HepG2 (cell line): ENCODE measurements at regions of chr7 and their contacts with region 1.

Region 1: DNA sequence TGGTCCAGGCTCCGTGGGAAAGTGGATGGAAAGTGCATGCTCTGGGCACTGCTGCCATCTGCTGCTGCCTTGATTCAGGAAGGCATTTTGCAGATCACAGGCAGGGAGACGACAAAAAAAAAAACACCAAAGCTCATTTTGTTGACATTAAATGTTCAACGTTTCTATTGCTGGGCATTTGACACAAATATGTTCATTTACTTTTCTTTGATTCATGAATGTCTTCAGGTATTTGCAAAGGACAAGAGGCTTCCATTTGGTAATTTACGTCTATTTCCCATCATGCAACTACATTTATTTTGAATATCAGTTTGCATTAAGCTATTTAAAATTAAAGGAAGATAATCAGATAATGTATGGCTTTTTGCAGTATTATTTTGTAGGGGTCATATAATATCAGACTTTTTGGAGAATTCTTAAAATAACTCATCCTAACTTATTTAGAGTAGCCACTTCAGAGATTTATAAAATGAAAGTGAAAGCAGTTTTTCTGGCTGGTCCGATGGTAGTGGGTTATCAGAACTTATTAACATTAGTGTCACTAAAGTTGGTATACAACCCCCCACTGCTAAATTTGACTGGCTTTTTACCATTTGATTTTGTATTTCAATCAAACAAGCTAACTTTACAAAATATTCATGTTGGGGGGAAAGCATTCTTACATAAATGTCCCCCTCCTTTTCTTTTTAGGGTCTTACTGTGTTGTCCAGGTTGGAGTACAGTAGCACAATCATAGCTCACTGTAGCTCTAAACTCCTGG is 65.3 kb downstream of the PDIA4 start:
- DNase-seq: peak; percentile 45
- ATAC-seq: peak; percentile 3; the same call in 2 of the 3 replicates
- H3K4me3 ChIP-seq: peak overlapping the region; percentile 70 to 81 (median 71)
- H3K27ac ChIP-seq: peak overlapping the region; percentile 53
- H3K4me1 ChIP-seq: peaks cover 60% of the 10 kb centered on the region
- H3K27me3 ChIP-seq: no peaks in the 10 kb centered on the region; a peak in 2 of 5 replicates
- CTCF ChIP-seq: peak; percentile 93
- EP300 ChIP-seq: no peak
- POLR2A ChIP-seq: no peak
- RAD21 ChIP-seq: peak; percentile 48

Region 2: GRCh38 chr7:148503875-148504487 is 459.0 kb before region 1 on chr7:
- CTCF ChIA-PET with region 1: interaction called, 5 read pairs
- POLR2A ChIA-PET with region 1: no interaction called
- in situ Hi-C with region 1: loop called (anchors 10 kb)
- intact Hi-C with region 1: loop called (anchors 5 kb)
- DNase-seq: no peak
- ATAC-seq: no peak
- H3K4me3 ChIP-seq: no peak overlapping the region
- H3K27ac ChIP-seq: no peak overlapping the region
- H3K4me1 ChIP-seq: no peaks in the 10 kb centered on the region
- H3K27me3 ChIP-seq: peaks cover 0 to 23% of the 10 kb centered on the region in 2 experiments; a peak in 2 of 5 replicates
- CTCF ChIP-seq: peak; percentile 65
- EP300 ChIP-seq: no peak
- POLR2A ChIP-seq: no peak
- RAD21 ChIP-seq: 0 out of 2 replicates have a peak, but pooled peaks have one; percentile 27

Region 3: GRCh38 chr7:148698397-148699023 is 264.5 kb before region 1 on chr7 and contains the start of gene CUL1:
- CTCF ChIA-PET with region 1: no interaction called
- POLR2A ChIA-PET with region 1: no interaction called
- in situ Hi-C with region 1: no loop called
- intact Hi-C with region 1: loop called (anchors 10 kb)
- DNase-seq: peak; percentile 46
- ATAC-seq: peak; percentile 83
- H3K4me3 ChIP-seq: peak within 1 kb of the TSS; percentile 84 to 89 (median 88)
- H3K27ac ChIP-seq: peak within 1 kb of the TSS; percentile 98
- H3K4me1 ChIP-seq: peaks cover 47% of the 10 kb centered on the region
- H3K27me3 ChIP-seq: no peaks in the 10 kb centered on the region
- CTCF ChIP-seq: 0 out of 2 replicates have a peak, but pooled peaks have one; percentile 4
- EP300 ChIP-seq: no peak
- POLR2A ChIP-seq: peak; percentile 62 to 82
- RAD21 ChIP-seq: no peak
- total RNA-seq, gene CUL1: 45.9 and 80.4 TPM in 2 replicates

Region 4: DNA sequence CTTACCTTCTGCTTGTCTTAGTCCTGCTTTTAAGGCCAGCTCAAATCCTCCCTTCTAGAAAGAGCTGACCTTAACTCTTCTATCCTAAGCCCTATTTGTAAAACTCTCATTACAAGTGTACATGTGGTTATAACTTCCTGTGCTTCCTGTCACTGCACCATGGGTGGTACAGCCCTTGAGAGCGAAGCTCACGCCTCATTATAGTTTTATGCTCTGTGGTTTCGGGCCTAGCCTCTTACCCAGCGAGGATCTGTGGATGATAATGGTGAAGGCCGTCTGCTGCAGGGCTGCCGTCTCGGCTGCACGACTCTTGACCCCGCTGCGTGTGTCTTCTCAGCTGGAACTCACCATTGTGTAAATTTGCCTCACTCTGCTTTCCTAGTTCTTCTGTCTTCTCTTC is 189.7 kb before region 1 on chr7:
- CTCF ChIA-PET with region 1: no interaction called
- POLR2A ChIA-PET with region 1: no interaction called
- in situ Hi-C with region 1: no loop called
- intact Hi-C with region 1: no loop called
- DNase-seq: no peak
- ATAC-seq: no peak
- H3K4me3 ChIP-seq: no peak overlapping the region
- H3K27ac ChIP-seq: no peak overlapping the region
- H3K4me1 ChIP-seq: no peaks in the 10 kb centered on the region
- H3K27me3 ChIP-seq: no peaks in the 10 kb centered on the region
- CTCF ChIP-seq: no peak
- EP300 ChIP-seq: no peak
- POLR2A ChIP-seq: no peak
- RAD21 ChIP-seq: no peak

Region 5: DNA sequence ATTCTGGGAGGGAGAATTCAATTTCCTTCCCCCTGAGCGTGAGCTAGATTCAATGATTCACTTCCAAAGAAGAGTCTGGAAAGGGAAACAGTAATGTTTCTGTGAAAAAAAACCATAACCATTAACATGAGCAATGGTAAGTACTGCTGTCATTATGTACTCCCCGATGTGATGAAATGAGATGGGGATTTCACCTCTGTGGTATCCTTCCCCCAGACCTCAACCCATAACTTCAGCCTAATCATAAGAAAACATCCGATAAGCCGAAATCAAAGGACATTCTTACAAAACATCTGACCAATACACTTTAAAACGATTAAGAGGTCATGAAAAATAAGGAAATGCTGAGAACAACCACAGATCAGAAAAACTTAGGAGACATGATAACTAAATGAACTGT is 106.1 kb before region 1 on chr7:
- CTCF ChIA-PET with region 1: interaction called, 6 read pairs
- POLR2A ChIA-PET with region 1: no interaction called
- in situ Hi-C with region 1: no loop called
- intact Hi-C with region 1: loop called (anchors 1 kb)
- DNase-seq: no peak
- ATAC-seq: no peak
- H3K4me3 ChIP-seq: no peak overlapping the region
- H3K27ac ChIP-seq: no peak overlapping the region
- H3K4me1 ChIP-seq: peaks cover 11% of the 10 kb centered on the region
- H3K27me3 ChIP-seq: no peaks in the 10 kb centered on the region
- CTCF ChIP-seq: no peak
- EP300 ChIP-seq: no peak
- POLR2A ChIP-seq: no peak
- RAD21 ChIP-seq: no peak

Region 6: DNA sequence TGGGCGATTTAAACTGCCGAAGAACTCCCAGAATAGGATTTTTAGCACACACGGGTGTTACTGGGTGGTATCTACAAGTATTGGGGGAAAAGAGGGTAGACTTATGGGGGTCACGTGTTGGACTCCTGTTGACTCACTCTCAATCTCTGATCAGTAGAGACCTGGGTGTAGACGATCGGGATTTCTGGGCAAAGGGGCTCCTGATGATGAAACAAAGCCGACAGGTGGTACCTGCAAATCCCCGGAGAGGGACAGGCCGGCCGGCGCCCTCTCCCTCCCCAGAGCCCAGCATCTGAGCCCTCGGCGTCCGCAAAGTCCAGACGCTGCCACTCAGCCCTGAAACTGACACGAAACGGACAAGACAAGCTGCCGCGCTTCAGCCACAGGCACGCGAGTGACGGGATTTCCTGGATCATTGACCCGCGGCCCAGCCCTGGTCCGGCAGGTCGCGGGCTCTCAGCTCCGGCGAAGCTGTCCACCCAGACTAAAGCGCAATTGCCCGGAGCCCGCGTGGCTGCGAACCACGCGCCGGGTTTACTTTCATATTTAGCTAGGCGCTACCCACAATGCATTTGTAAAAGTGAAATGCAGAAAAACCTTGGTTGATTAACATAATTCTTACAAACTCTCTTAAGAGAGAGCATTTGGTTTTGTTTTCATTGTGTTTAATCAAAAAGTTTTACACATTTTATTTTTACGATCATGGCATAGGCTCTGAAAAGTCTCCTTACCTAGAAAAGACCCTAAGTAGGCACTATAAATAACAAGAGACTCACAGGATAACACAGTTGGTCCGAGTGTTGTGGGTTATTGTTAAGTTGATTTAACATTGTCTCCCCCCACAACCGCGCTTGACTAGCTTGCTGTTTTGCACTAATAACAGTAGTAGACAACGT is 22.1 kb before region 1 on chr7:
- CTCF ChIA-PET with region 1: no interaction called
- POLR2A ChIA-PET with region 1: interaction called, 6 read pairs
- in situ Hi-C with region 1: no loop called
- intact Hi-C with region 1: loop called (anchors 1 kb)
- DNase-seq: peak; percentile 72
- ATAC-seq: peak; percentile 87
- H3K4me3 ChIP-seq: peak overlapping the region; percentile 81 to 91 (median 88)
- H3K27ac ChIP-seq: peak overlapping the region; percentile 84
- H3K4me1 ChIP-seq: peaks cover 16% of the 10 kb centered on the region; the same call in 1 of the 2 replicates
- H3K27me3 ChIP-seq: no peaks in the 10 kb centered on the region; a peak in 1 of 5 replicates
- CTCF ChIP-seq: no peak
- EP300 ChIP-seq: no peak
- POLR2A ChIP-seq: peak; percentile 62 to 70
- RAD21 ChIP-seq: no peak

Region 7: DNA sequence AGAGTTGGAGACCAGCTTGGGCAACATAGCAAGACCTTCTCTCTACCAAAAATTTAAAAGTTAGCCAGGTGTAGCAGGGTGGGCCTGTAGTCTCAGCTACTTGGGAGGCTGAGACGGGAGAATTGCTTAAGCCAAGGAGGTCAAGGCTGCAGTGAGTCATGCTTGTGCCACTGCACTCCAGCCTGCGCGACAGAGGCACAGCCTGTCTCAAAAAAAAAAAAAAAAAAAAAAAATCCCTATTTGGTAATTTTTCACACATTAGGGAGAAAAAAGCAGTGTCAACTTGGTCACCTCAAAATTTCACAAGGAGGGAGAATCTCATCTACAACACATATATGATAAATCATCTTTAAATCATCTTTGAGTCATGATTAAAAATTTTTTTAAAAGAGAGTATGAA is 177.8 kb after region 1 on chr7:
- CTCF ChIA-PET with region 1: no interaction called
- POLR2A ChIA-PET with region 1: no interaction called
- in situ Hi-C with region 1: no loop called
- intact Hi-C with region 1: no loop called
- DNase-seq: no peak
- ATAC-seq: no peak
- H3K4me3 ChIP-seq: no peak overlapping the region
- H3K27ac ChIP-seq: no peak overlapping the region
- H3K4me1 ChIP-seq: peaks cover 6% of the 10 kb centered on the region; the same call in 1 of the 2 replicates
- H3K27me3 ChIP-seq: no peaks in the 10 kb centered on the region
- CTCF ChIP-seq: no peak
- EP300 ChIP-seq: no peak
- POLR2A ChIP-seq: no peak
- RAD21 ChIP-seq: no peak